Endothelial cell of umbilical vein (primary cell): ENCODE measurements at regions of chr1 and their contacts with region 1.

Region 1: GRCh38 chr1:36948606-36949005 is 85.7 kb downstream of the GRIK3 start:
- DNase-seq: no peak
- H3K4me3 ChIP-seq: no peak overlapping the region
- H3K27ac ChIP-seq: no peak overlapping the region
- H3K4me1 ChIP-seq: no peaks in the 10 kb centered on the region
- H3K27me3 ChIP-seq: no peaks in the 10 kb centered on the region
- CTCF ChIP-seq: no peak
- POLR2A ChIP-seq: no peak

Region 2: GRCh38 chr1:36855699-36856098 is 92.9 kb before region 1 on chr1:
- CTCF ChIA-PET with region 1: no interaction called
- POLR2A ChIA-PET with region 1: interaction called, 11 read pairs
- dilution Hi-C with region 1: no loop called
- intact Hi-C with region 1: no loop called
- DNase-seq: no peak
- H3K4me3 ChIP-seq: no peak overlapping the region
- H3K27ac ChIP-seq: no peak overlapping the region
- H3K4me1 ChIP-seq: no peaks in the 10 kb centered on the region
- H3K27me3 ChIP-seq: no peaks in the 10 kb centered on the region
- CTCF ChIP-seq: no peak
- POLR2A ChIP-seq: no peak